Psoas muscle (tissue), 8 donors: ENCODE measurements at regions of chr12 and their contacts with region 1.

Region 1: DNA sequence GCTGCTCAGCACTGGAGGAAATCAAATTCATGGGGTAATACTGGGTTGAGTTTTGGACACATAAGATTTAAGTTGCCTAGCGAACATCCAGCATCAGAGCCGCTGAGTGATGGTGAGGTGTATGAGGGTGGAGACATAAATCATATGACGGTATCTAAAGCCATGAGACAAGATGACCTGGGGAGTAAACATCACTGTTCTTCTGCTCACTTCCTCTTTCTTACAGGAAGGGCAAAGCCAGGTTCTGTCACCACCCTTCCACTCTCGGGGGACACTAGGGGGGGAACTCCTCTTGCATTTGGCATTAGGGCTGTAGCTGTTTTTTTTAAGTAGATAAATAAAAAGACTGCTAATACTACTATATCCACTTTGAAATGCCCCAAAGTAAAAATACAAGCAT is 24.0 kb downstream of the PRDM4 start:
- DNase-seq: no peak
- ATAC-seq: no peak
- H3K4me3 ChIP-seq: no peak overlapping the region
- H3K27ac ChIP-seq: no peak overlapping the region
- H3K4me1 ChIP-seq: no peaks in the 10 kb centered on the region
- H3K27me3 ChIP-seq: no peaks in the 10 kb centered on the region
- CTCF ChIP-seq: no peak

Region 2: DNA sequence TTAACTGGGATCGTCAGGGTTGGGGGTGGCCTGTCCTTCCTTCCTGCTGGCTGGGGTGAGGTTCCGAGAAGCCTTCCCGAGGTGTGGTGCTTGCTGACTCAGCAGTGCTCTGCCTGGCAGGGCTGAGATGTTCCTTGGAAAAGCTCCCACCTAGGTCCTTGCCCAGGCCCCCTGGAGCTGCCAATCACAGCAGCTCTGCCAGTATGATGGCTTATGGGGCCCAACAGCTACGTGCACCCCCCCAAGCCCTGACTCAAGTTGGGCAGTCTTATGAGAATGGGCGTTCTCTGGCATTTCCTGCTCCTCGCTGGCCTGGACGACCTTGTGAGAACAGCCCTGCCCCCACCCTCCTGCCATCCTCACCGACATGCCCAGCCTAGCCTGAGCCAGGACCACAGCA is 351.4 kb before region 1 on chr12:
- intact Hi-C with region 1: no loop called
- DNase-seq: no peak
- ATAC-seq: no peak
- H3K4me3 ChIP-seq: no peak overlapping the region
- H3K27ac ChIP-seq: no peak overlapping the region
- H3K4me1 ChIP-seq: no peaks in the 10 kb centered on the region
- H3K27me3 ChIP-seq: no peaks in the 10 kb centered on the region
- CTCF ChIP-seq: no peak

Region 3: DNA sequence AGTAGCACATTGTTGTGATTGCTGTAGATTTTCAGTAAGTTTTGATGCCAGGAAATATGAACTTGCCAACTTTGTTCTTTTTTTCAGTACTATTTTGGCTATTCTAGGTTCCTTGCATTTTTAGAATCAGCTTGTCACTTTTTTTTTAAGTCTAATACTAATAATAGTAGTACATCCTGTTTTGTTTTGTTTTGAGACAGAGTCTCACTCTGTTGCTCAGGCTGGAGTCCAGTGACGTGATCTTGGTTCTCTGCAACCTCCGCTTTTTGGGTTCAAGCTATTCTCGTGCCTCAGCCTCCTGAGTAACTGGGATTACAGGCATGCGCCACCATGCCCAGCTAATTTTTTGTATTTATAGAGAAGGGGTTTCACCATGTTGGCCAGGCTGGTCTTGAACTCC is 34.8 kb before region 1 on chr12:
- intact Hi-C with region 1: loop called (anchors 5 kb)
- DNase-seq: no peak
- ATAC-seq: no peak
- H3K4me3 ChIP-seq: no peak overlapping the region
- H3K27ac ChIP-seq: no peak overlapping the region
- H3K4me1 ChIP-seq: no peaks in the 10 kb centered on the region
- H3K27me3 ChIP-seq: no peaks in the 10 kb centered on the region
- CTCF ChIP-seq: no peak